Endothelial cell of umbilical vein (primary cell): ENCODE measurements at regions of chr1 and their contacts with region 1.

Region 1: DNA sequence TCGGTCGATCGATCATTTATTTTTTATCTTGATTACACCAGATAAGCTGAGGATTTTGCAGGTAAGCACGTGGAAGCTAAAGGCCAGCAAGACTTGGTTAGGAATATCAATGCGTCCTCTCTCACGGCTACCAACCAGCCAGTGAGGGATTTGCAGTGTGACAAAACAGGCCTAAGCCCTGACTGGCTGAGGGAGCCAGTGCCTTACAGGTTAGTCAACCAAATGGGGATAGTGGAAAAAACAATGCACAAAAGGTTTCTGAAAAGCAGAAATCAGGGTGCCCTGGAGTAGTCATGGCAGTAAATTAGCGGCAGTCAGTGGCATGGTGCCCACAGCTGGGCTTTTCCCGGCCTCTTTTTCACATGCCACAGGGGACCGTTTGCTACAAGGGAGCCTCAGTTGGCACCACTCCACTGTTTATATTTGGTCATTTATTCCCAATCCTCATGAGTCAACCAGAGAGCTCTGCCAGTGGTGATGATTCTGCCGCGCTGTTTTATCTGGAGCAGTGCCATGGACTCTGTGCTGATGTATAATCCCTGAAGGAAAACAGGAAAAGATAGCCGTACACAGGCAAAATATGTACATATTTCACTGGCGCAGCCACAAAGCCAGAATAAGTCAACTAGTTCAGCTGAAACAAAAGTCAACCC is 167.6 kb downstream of the RHOU start:
- DNase-seq: peak; percentile 99
- H3K4me3 ChIP-seq: no peak overlapping the region
- H3K27ac ChIP-seq: no peak overlapping the region
- H3K4me1 ChIP-seq: peaks cover 12% of the 10 kb centered on the region
- H3K27me3 ChIP-seq: peaks cover 0 to 2% of the 10 kb centered on the region in 2 experiments
- CTCF ChIP-seq: no peak
- POLR2A ChIP-seq: no peak

Region 2: DNA sequence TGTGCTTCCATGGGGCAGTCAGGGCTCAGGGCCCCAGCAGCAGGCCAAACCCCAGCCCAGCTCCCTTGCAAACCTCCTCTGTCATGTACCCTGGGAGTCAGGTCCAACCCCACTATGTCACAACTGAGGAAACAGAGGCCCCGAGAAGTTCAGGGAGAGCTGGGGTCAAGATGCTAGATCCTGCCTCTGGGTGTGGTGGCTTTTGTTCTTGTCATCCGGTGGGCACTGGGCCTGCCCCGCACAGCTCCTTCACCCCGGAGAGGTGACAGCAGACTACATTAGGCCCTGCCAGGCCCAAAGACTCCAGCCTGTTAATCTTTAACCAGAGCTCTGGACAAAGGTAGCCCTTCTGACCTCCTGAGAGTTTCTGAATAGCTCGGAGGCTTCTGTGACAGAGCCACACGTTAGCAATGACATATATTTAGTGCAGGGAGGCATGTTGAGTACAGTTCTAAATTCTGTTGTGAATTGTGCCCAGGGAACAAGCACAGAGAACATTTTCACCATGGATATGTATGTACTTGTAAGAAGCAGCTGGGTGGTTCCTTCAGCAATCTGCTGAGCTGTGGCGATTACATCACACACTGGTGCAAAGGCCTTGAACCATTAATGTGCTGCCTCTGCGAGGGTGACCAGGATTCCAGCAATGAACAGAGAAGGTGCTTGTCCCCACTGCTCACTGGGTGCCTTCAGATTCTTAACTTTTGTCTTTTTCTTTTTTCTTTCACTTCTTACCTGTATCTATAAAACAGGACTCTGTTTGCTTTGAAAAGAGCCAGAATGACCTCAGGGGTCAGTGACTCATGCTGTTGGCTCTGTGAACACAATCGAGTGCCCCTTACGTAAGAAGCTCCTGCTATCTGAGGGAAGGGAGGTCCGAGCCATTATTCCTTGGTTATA is 64.8 kb before region 1 on chr1:
- CTCF ChIA-PET with region 1: no interaction called
- POLR2A ChIA-PET with region 1: no interaction called
- dilution Hi-C with region 1: no loop called
- intact Hi-C with region 1: loop called (anchors 1 kb)
- DNase-seq: peak; percentile 96
- H3K4me3 ChIP-seq: no peak overlapping the region
- H3K27ac ChIP-seq: peak overlapping the region; percentile 60
- H3K4me1 ChIP-seq: peaks cover 28% of the 10 kb centered on the region
- H3K27me3 ChIP-seq: no peaks in the 10 kb centered on the region
- CTCF ChIP-seq: no peak
- POLR2A ChIP-seq: no peak

Region 3: GRCh38 chr1:228938537-228938901 is 35.6 kb after region 1 on chr1:
- CTCF ChIA-PET with region 1: no interaction called
- POLR2A ChIA-PET with region 1: no interaction called
- dilution Hi-C with region 1: no loop called
- intact Hi-C with region 1: loop called (anchors 1 kb)
- DNase-seq: peak; percentile 36
- H3K4me3 ChIP-seq: no peak overlapping the region
- H3K27ac ChIP-seq: peak overlapping the region; percentile 13
- H3K4me1 ChIP-seq: peaks cover 4% of the 10 kb centered on the region
- H3K27me3 ChIP-seq: no peaks in the 10 kb centered on the region
- CTCF ChIP-seq: no peak
- POLR2A ChIP-seq: no peak

Region 4: GRCh38 chr1:229024528-229025130 is 121.7 kb after region 1 on chr1:
- CTCF ChIA-PET with region 1: no interaction called
- POLR2A ChIA-PET with region 1: no interaction called
- dilution Hi-C with region 1: no loop called
- intact Hi-C with region 1: loop called (anchors 2 kb)
- DNase-seq: peak; percentile 55
- H3K4me3 ChIP-seq: no peak overlapping the region
- H3K27ac ChIP-seq: no peak overlapping the region
- H3K4me1 ChIP-seq: peaks cover 15% of the 10 kb centered on the region
- H3K27me3 ChIP-seq: no peaks in the 10 kb centered on the region
- CTCF ChIP-seq: no peak
- POLR2A ChIP-seq: no peak

Region 5: DNA sequence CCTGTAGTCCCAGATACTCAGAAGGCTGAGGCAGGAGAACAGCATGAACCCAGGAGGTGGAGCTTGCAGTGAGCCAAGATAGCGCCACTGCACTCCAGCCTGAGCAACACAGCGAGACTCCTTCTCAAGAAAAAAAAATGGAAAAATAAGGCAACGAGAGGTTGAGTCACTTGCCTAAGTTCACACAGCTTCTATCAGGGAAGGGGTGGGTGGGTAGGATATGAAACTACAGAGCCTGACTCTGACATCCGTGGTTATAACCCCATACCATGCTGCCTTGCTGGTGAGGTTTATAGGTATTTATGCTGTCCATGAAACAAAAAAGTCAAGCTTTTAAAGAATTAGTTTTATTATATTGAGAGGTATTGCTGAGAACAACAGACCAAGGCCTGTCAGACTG is 306.5 kb after region 1 on chr1:
- CTCF ChIA-PET with region 1: no interaction called
- POLR2A ChIA-PET with region 1: no interaction called
- dilution Hi-C with region 1: no loop called
- intact Hi-C with region 1: no loop called
- DNase-seq: no peak
- H3K4me3 ChIP-seq: no peak overlapping the region
- H3K27ac ChIP-seq: no peak overlapping the region
- H3K4me1 ChIP-seq: no peaks in the 10 kb centered on the region
- H3K27me3 ChIP-seq: no peaks in the 10 kb centered on the region
- CTCF ChIP-seq: no peak
- POLR2A ChIP-seq: no peak